ENCODE measurements at regions of chr6 and their contacts with region 1.

Region 1: GRCh38 chr6:170516783-170517616 is 36.1 kb downstream of the PSMB1 start:
- DNase-seq: peak in 30 of 35 experiments; percentile 6 to 63 (median 16)
- ATAC-seq: peak; percentile 82 to 91 (median 86)
- H3K4me3 ChIP-seq: peak overlapping the region in 1 of 2 donors; percentile 19
- H3K4me3 Mint-ChIP-seq: peak overlapping the region in 2 of 3 donors; percentile 13 to 17
- H3K27ac ChIP-seq: no peak overlapping the region
- H3K27ac Mint-ChIP-seq: no peak overlapping the region
- H3K4me1 ChIP-seq: peaks cover 0 to 3% of the 10 kb centered on the region in 2 experiments
- H3K4me1 Mint-ChIP-seq: peaks cover 0 to 4% (median 0%) of the 10 kb centered on the region in 3 donors
- H3K27me3 ChIP-seq: peaks cover 0 to 3% of the 10 kb centered on the region in 2 experiments
- H3K27me3 Mint-ChIP-seq: peaks cover 40 to 50% of the 10 kb centered on the region in 2 donors

Region 2: GRCh38 chr6:169789982-169790927 is 726.7 kb before region 1 on chr6:
- CTCF ChIA-PET with region 1: interaction called, 3 to 17 read pairs
- POLR2A ChIA-PET with region 1: no interaction called
- DNase-seq: peak; percentile 31 to 80 (median 64)
- ATAC-seq: peak; percentile 95 to 98 (median 97)
- H3K4me3 ChIP-seq: peak overlapping the region; percentile 52 to 86
- H3K4me3 Mint-ChIP-seq: peak overlapping the region; percentile 81 to 87 (median 81)
- H3K27ac ChIP-seq: no peak overlapping the region
- H3K27ac Mint-ChIP-seq: peak overlapping the region in 1 of 2 donors; percentile 39
- H3K4me1 ChIP-seq: peaks cover 2 to 14% of the 10 kb centered on the region in 2 experiments
- H3K4me1 Mint-ChIP-seq: peaks cover 14 to 22% (median 18%) of the 10 kb centered on the region in 3 donors
- H3K27me3 ChIP-seq: peaks cover 3 to 46% of the 10 kb centered on the region in 2 experiments
- H3K27me3 Mint-ChIP-seq: peaks cover 24 to 31% of the 10 kb centered on the region in 2 donors

Region 3: GRCh38 chr6:169831450-169832246 is 685.4 kb before region 1 on chr6:
- CTCF ChIA-PET with region 1: interaction called, 4 to 16 read pairs
- POLR2A ChIA-PET with region 1: no interaction called
- DNase-seq: peak in 34 of 35 experiments; percentile 28 to 80 (median 56)
- ATAC-seq: peak; percentile 55 to 75 (median 60)
- H3K4me3 ChIP-seq: no peak overlapping the region
- H3K4me3 Mint-ChIP-seq: no peak overlapping the region
- H3K27ac ChIP-seq: no peak overlapping the region
- H3K27ac Mint-ChIP-seq: no peak overlapping the region
- H3K4me1 ChIP-seq: peaks cover 0 to 6% of the 10 kb centered on the region in 2 experiments
- H3K4me1 Mint-ChIP-seq: peaks cover 0 to 2% (median 0%) of the 10 kb centered on the region in 3 donors
- H3K27me3 ChIP-seq: peaks cover 0 to 36% of the 10 kb centered on the region in 2 experiments
- H3K27me3 Mint-ChIP-seq: peaks cover 33 to 54% of the 10 kb centered on the region in 2 donors

Region 4: GRCh38 chr6:169950558-169950957 is 566.4 kb before region 1 on chr6:
- CTCF ChIA-PET with region 1: interaction called, 5 to 18 read pairs
- POLR2A ChIA-PET with region 1: no interaction called
- DNase-seq: peak in 19 of 35 experiments; percentile 15 to 60 (median 28)
- ATAC-seq: peak in 2 of 4 experiments; percentile 40 to 47
- H3K4me3 ChIP-seq: no peak overlapping the region
- H3K4me3 Mint-ChIP-seq: no peak overlapping the region
- H3K27ac ChIP-seq: no peak overlapping the region
- H3K27ac Mint-ChIP-seq: no peak overlapping the region
- H3K4me1 ChIP-seq: no peaks in the 10 kb centered on the region
- H3K4me1 Mint-ChIP-seq: no peaks in the 10 kb centered on the region
- H3K27me3 ChIP-seq: no peaks in the 10 kb centered on the region
- H3K27me3 Mint-ChIP-seq: peaks cover under 1 to 2% of the 10 kb centered on the region in 2 donors

Measured in T-cell (primary cell).